ENCODE measurements at regions of chr13 and their contacts with region 1.

Region 1: DNA sequence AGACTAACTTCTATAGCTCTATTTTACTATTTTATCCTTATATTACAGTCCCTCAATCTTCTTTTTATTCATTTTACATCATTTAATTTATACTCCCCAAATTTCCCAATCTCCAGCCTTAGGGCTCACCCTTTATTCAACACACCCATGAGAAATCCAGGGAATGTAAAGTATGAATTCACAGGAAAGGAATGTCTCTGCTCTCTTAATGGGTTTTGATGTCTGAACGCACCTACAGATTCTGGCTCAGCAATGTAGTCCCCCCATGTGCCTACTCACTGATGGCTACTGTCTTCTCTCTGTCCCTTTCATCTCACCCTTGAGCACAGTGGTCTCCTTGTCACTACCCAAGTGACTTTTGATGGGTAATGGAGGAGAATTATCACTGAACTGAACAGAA is 32.8 kb downstream of the TNFSF13B start:
- DNase-seq: no peak
- ATAC-seq: no peak
- H3K4me3 Mint-ChIP-seq: no peak overlapping the region
- H3K27ac Mint-ChIP-seq: no peak overlapping the region
- H3K4me1 Mint-ChIP-seq: peaks cover 5% of the 10 kb centered on the region
- H3K27me3 Mint-ChIP-seq: no peaks in the 10 kb centered on the region

Region 2: DNA sequence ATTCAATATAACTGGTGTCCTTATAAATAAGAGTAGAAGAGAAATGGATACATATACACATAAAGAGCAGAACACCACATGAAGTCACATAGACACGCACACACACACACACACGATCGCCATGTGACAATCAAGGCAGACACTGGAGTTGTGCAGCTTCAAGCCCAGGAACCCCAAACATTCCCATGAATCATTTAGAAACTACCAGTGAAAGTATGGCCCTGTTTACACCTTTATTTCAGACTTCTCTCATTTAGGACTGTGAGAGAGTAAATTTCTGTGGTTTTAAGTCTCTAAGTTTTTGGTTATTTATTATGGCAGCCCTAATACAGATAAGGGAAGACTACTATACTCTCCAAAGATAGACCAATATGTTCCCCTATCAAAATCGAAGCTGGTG is 53.1 kb before region 1 on chr13:
- CTCF ChIA-PET with region 1: no interaction called
- POLR2A ChIA-PET with region 1: no interaction called
- intact Hi-C with region 1: loop called in 1 of 2 experiments (anchors 5 kb)
- DNase-seq: no peak
- ATAC-seq: no peak
- H3K4me3 Mint-ChIP-seq: no peak overlapping the region
- H3K27ac Mint-ChIP-seq: no peak overlapping the region
- H3K4me1 Mint-ChIP-seq: peaks cover 5% of the 10 kb centered on the region
- H3K27me3 Mint-ChIP-seq: no peaks in the 10 kb centered on the region

Region 3: GRCh38 chr13:108289819-108290218 is 12.5 kb before region 1 on chr13:
- CTCF ChIA-PET with region 1: no interaction called
- POLR2A ChIA-PET with region 1: no interaction called
- intact Hi-C with region 1: loop called in 1 of 2 experiments (anchors 1 kb)
- DNase-seq: no peak
- ATAC-seq: no peak
- H3K4me3 Mint-ChIP-seq: no peak overlapping the region
- H3K27ac Mint-ChIP-seq: no peak overlapping the region
- H3K4me1 Mint-ChIP-seq: no peaks in the 10 kb centered on the region
- H3K27me3 Mint-ChIP-seq: no peaks in the 10 kb centered on the region

Measured in activated CD4-positive, alpha-beta T cell treated with anti-CD3 and anti-CD28 coated beads for 36 hours (primary cell).